GM13976 (cell line): ENCODE measurements at regions of chr3 and their contacts with region 1.

Region 1: GRCh38 chr3:192812743-192813383 is 85.5 kb upstream of the FGF12 start:
- DNase-seq: no peak
- CTCF ChIP-seq: no peak

Region 2: GRCh38 chr3:192933779-192934460 is 121.1 kb after region 1 on chr3:
- in situ Hi-C with region 1: no loop called
- DNase-seq: no peak
- CTCF ChIP-seq: no peak

Region 3: DNA sequence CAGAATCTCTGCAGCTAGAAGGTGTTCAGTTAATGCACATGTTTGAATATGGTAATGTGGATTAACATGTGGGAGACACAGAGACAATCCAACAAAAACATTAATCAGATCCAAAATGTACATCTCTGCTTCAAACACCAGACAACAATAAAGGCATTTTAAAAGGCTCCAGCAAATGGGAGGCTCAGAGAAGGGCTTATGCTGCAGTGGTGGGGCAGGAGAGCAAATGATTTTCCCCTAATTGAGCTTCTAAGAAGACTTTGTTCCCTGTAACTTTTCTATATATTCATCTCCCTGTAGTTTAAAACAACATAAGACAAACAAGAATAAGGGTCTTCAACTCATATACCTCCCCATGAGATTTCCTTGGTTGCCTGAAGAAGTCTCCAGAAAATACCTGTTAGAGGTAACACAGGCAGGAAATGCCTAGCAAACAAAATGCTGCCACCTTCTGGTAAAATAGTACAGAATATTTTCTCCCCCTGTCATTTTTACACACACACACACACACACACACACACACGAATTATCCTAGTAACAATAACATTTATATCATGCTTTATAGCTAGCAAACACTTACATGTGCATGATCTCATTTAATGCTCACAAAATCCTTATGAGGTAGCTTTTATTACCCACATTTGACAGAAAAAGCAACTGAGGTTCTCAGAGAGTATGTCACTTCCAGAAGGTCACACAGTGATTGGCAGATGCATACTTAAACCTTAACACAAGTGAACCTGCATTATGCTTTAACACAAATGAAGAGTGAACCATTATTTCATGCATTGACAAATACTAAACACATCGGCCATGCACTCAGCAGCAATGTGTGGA is 228.2 kb after region 1 on chr3:
- in situ Hi-C with region 1: loop called (anchors 5 kb)
- DNase-seq: peak; percentile 53
- CTCF ChIP-seq: peak; percentile 23